ENCODE measurements at regions of chr1 and their contacts with region 1.

Region 1: GRCh38 chr1:19715334-19716203 is 50.9 kb downstream of the HTR6 start:
- DNase-seq: peak; percentile 95 to 98
- ATAC-seq: peak; percentile 95
- H3K4me3 ChIP-seq: no peak overlapping the region
- H3K27ac ChIP-seq: no peak overlapping the region
- H3K4me1 ChIP-seq: no peaks in the 10 kb centered on the region
- H3K27me3 ChIP-seq: no peaks in the 10 kb centered on the region

Region 2: GRCh38 chr1:19735440-19736127 is 20.0 kb after region 1 on chr1:
- intact Hi-C with region 1: loop called in 1 of 2 experiments (anchors 1 kb)
- DNase-seq: peak; percentile 89 to 92
- ATAC-seq: peak; percentile 86
- H3K4me3 ChIP-seq: no peak overlapping the region
- H3K27ac ChIP-seq: peak overlapping the region; percentile 49 to 97
- H3K4me1 ChIP-seq: peaks cover 0 to 3% of the 10 kb centered on the region in 2 donors
- H3K27me3 ChIP-seq: no peaks in the 10 kb centered on the region

Region 3: DNA sequence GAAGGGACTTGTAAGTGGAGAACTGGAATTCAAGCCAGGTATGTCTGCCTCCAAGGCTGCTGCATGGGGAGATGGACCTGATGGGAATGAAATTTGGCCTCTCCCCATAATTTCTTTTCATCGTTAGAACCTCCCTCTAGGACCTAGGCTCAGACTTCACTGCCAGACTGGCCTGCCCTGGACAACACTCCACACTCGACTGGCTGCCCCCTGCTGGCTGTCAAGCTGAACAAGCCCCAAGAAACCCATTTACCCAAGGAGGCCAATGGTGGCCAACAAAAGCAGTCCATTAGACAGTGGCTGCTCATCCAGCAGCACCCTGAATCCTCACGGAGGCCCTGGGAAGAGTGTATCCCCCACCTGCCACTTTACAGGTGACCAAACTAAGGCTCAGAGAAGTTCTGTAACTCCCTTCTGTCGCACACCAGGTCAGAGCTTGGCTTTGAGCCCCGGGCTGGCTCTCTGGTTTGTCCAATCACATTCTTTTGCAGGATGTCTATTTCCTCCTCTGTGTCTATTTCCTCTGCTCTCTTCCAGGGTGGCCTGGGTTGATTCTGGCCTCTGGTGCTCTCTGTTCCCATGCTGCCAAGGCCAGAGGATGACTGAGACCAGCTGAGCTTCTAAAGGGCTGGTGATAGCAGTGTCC is 95.8 kb after region 1 on chr1:
- intact Hi-C with region 1: loop called (anchors 2 to 5 kb)
- DNase-seq: peak; percentile 72 to 84
- ATAC-seq: no peak
- H3K4me3 ChIP-seq: no peak overlapping the region
- H3K27ac ChIP-seq: no peak overlapping the region
- H3K4me1 ChIP-seq: no peaks in the 10 kb centered on the region
- H3K27me3 ChIP-seq: no peaks in the 10 kb centered on the region

Region 4: DNA sequence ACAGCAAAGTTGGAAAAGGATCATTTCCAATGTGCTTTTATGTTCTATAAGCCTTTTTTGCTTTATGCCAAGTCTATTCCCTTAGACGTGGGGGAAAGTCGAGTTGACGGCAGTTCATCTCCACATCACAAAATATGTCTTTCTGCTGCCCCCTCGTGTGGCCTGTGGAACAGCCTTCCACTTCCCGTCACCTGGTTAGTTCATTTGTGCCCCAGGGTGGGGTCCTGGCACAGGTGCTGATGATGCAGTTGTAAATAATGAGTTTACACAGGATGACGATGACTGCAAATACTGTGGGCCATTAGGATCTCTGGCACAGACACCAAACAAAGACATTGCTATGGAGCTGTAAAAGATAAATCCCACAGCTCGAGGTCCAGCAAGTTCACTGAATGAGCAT is 156.6 kb after region 1 on chr1:
- intact Hi-C with region 1: loop called in 1 of 2 experiments (anchors 10 kb)
- DNase-seq: no peak
- ATAC-seq: no peak
- H3K4me3 ChIP-seq: no peak overlapping the region
- H3K27ac ChIP-seq: no peak overlapping the region
- H3K4me1 ChIP-seq: no peaks in the 10 kb centered on the region
- H3K27me3 ChIP-seq: peaks cover 0 to 1% of the 10 kb centered on the region in 2 donors

Region 5: DNA sequence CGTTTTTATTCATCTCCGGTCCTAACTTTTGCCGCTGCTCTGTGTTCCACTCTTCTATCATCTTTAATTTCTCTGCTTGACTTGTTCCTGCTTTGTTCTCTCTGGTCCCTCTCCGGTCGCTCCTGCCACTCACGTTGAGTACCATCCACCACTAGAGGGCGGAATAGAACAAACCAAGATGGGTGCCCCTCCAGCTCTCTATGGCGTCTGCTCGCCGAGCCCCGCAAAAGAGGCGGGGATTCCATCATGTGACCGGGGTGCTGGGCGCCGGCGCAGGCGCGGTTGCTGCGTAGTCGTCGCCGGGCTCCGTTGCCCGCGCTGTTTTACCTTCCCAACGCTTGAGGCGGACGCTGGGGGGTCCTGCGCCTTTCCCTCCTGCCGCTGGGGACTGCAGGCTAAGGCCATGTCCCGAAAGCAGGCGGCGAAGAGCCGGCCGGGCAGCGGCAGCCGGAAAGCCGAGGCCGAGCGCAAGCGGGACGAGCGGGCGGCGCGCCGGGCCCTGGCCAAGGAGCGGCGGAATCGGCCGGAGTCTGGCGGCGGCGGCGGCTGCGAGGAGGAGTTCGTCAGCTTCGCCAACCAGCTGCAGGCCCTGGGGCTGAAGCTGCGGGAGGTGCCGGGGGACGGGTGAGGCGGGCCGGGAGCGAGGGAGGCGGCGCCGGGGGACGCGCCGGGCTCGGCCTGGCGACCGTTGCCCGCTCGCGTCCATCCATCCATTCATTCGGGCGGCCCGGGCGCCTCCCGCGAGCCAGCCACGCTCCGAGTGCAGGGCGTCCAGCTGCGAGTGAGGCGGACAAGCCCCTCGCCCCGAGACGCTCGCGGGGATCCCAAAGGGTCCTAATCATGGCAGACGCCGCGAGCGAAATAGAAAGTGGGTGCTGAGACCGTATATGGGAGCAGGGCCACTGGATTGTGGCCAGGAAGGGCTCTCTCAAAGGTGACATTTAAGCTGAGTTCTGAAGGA is 166.8 kb after region 1 on chr1 and contains the start of gene OTUD3:
- intact Hi-C with region 1: loop called (anchors 2 to 10 kb)
- DNase-seq: peak; percentile 97
- ATAC-seq: peak; percentile 98
- H3K4me3 ChIP-seq: peak within 1 kb of the TSS; percentile 50 to 87
- H3K27ac ChIP-seq: peak within 1 kb of the TSS; percentile 30 to 66
- H3K4me1 ChIP-seq: peaks cover 0 to 4% of the 10 kb centered on the region in 2 donors
- H3K27me3 ChIP-seq: no peaks in the 10 kb centered on the region
- total RNA-seq, gene OTUD3: 11.5 to 19.5 TPM

Region 6: GRCh38 chr1:20017741-20018140 is 302.2 kb after region 1 on chr1:
- intact Hi-C with region 1: no loop called
- DNase-seq: no peak
- ATAC-seq: no peak
- H3K4me3 ChIP-seq: no peak overlapping the region
- H3K27ac ChIP-seq: no peak overlapping the region
- H3K4me1 ChIP-seq: no peaks in the 10 kb centered on the region
- H3K27me3 ChIP-seq: no peaks in the 10 kb centered on the region

Region 7: DNA sequence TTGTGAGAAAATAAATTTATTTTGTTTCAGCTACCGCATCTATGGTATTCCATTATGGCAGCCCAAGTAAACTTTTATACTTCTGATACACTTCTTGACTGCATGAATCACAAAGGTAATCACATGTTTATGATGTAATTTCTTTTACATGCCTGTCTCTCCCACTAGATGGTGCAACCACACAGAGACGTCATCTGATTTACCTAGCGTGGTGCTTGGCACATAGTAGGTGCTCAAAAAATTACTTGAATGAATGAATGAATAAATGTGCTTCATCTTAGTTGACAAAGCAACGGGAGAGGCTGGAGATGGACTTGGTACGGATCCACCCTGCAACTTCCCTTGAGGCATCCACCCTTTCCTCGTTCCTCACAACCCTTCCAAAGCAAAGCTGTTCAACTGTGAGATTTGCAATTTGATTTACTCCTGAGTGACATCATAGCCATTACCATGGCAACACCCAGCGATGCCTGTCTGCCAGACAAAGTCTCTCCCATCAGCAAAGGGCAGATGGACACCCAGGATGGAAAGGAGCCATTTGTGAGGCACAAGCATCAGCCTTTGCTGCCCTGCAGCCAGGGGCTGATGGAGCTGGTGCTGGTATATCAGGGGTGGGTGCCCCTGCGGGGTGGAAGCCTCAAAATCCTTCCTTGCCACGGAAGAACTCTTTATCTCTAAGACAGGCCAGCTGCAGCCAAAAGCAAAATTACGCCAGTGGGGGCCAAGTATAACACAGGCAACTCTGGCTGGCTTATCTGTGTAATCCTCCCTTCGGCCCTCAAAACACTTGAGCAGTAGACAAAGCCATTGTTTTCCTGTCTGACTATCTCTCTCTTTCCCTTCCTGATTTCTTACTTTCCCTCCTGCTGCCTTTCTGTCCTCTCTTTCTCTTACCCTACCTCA is 556.2 kb after region 1 on chr1:
- intact Hi-C with region 1: no loop called
- DNase-seq: no peak
- ATAC-seq: no peak
- H3K4me3 ChIP-seq: no peak overlapping the region
- H3K27ac ChIP-seq: no peak overlapping the region
- H3K4me1 ChIP-seq: no peaks in the 10 kb centered on the region
- H3K27me3 ChIP-seq: no peaks in the 10 kb centered on the region

Measured in aorta (tissue), 5 donors.